Calu3 (cell line): ENCODE measurements at regions of chr2 and their contacts with region 1.

Region 1: DNA sequence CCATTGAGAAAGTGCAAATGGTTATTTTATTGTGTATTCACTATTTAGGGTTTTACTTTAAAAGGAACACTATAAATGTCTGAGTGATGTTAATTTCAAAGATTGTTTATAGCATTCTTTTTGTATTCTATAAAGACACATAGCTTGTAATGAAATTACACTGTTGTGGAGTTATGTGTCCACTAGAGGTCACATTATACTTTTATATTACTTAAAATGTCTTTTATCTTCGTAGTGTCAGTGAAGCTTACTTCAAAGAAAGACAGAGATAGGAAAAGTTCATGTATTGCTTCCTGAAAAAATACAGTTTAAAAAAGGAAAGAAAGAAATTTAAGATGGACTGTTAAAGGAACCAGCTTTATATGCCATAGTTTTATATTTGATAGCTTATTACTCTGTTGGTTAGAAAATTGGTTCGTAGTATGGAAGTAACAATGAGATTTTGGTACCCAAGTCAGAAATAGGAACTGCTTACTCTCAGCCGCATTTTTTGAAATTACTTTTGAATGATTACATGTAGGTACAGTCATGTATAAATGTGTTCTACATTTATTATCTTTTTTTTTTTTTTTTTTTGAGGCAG is 20.5 kb downstream of the APLF start:
- DNase-seq: no peak
- H3K4me3 Mint-ChIP-seq: no peak overlapping the region
- H3K27ac Mint-ChIP-seq: no peak overlapping the region
- H3K4me1 Mint-ChIP-seq: no peaks in the 10 kb centered on the region
- H3K27me3 Mint-ChIP-seq: no peaks in the 10 kb centered on the region
- CTCF ChIP-seq: no peak

Region 2: GRCh38 chr2:68441179-68441993 is 46.5 kb before region 1 on chr2:
- CTCF ChIA-PET with region 1: no interaction called
- intact Hi-C with region 1: no loop called
- DNase-seq: peak; percentile 75
- H3K4me3 Mint-ChIP-seq: no peak overlapping the region
- H3K27ac Mint-ChIP-seq: no peak overlapping the region
- H3K4me1 Mint-ChIP-seq: no peaks in the 10 kb centered on the region
- H3K27me3 Mint-ChIP-seq: peaks cover 20% of the 10 kb centered on the region
- CTCF ChIP-seq: peak; percentile 77

Region 3: DNA sequence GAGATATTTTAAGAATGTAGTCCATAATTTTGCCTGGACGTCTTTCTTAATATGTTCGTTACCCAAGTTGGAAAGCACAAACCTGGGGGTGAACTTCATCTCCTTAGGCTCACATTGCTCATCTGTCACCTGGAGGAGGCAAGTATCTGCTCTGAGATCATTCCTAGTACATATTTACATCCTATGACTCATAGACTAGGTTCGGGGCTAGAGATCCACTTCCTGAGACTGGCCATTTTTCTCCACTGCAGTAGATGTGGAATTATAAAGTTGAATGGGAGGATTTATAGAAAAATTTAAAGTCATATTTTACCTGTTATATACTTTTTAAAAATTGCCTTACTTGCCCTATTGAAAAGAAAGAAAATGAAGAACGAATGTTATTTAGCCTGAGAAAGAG is 78.0 kb after region 1 on chr2:
- CTCF ChIA-PET with region 1: no interaction called
- intact Hi-C with region 1: no loop called
- DNase-seq: no peak
- H3K4me3 Mint-ChIP-seq: no peak overlapping the region
- H3K27ac Mint-ChIP-seq: no peak overlapping the region
- H3K4me1 Mint-ChIP-seq: no peaks in the 10 kb centered on the region
- H3K27me3 Mint-ChIP-seq: no peaks in the 10 kb centered on the region
- CTCF ChIP-seq: no peak

Region 4: DNA sequence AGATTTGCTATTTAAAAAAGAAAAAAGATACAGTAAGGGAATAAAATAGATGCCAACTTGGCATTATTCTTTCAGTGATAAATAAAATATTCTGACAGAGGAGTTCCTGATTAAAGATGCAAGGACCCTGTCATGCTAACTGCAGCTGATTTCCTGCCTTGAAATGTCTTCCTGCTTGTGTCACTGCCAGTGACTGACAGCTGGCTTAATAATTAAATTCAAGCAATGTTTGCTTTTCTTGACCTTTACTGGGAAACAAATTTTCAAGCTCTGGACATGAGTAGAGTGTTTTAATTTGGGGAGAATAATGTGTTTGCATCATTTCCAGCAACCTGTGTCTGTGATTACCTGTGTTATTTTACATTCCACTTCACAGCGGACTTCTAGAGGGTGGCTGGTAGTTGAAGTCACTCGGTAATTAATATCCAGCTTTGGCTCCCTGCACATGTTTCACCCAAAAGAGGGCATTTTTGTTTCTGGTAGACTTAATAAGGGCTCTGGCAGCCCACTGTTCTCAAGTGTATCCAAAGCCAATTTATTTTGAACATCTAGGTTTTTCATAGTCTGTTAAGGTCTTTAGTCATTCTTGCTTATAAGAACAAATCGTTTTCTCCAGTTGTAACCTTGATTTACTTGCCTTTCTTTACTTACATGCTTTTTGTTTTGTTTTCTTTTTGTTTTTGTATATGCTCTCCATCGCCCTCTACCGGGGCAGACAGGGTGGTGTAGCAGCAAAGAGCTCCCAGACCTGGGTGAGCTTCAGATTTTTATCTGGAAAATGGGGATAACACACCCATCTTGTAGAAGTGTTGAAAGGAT is 107.0 kb after region 1 on chr2:
- CTCF ChIA-PET with region 1: interaction called, 29 read pairs
- intact Hi-C with region 1: loop called (anchors 1 kb)
- DNase-seq: peak; percentile 53
- H3K4me3 Mint-ChIP-seq: no peak overlapping the region
- H3K27ac Mint-ChIP-seq: no peak overlapping the region
- H3K4me1 Mint-ChIP-seq: peaks cover 14% of the 10 kb centered on the region
- H3K27me3 Mint-ChIP-seq: no peaks in the 10 kb centered on the region
- CTCF ChIP-seq: peak; percentile 70

Region 5: DNA sequence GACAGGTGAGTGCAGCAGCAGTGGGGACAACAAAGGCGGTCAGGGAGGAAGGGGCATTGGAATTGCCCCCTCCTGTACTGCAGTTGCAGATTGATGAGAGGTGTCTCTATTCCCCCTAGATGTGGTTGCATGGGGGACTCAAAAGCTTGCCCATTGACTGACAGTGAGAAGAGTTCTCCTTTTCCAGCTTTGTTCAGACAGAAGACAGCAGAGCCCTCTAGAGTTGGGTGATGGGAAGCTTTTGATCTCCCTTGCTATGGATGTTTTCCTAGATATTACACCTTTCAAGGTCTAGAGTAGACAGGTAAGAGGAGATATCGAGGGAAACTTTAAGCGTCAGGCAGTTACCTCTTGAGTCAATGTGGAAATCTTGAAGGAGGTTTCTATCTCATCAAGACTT is 158.4 kb after region 1 on chr2:
- CTCF ChIA-PET with region 1: interaction called, 10 read pairs
- intact Hi-C with region 1: loop called (anchors 1 kb)
- DNase-seq: no peak
- H3K4me3 Mint-ChIP-seq: no peak overlapping the region
- H3K27ac Mint-ChIP-seq: no peak overlapping the region
- H3K4me1 Mint-ChIP-seq: no peaks in the 10 kb centered on the region
- H3K27me3 Mint-ChIP-seq: peaks cover 100% of the 10 kb centered on the region
- CTCF ChIP-seq: no peak

Region 6: DNA sequence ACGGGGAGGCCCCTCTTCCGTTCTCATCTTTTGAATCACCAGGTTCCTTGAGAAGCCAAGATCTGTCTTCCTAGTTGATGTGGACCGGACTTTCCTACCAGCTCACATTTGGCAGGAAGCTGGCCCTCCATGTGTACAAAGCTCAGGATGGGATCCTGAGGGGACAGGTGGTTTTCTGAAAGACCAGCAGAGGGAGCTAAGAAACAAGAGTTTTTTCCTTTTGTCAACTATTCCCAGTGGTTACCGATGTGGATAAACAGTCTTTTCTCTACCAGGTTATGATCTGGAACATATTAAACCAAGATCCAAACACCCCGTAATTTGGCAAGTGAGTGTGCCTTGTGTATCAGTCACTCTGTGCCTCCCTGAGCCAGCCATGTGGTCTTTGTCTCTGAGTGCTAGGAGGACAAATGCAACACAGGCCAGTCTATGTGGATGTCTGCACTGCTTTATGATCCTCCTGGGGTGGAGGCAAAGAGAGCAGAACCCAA is 221.6 kb after region 1 on chr2:
- CTCF ChIA-PET with region 1: interaction called, 10 read pairs
- intact Hi-C with region 1: loop called (anchors 2 kb)
- DNase-seq: peak; percentile 17
- H3K4me3 Mint-ChIP-seq: no peak overlapping the region
- H3K27ac Mint-ChIP-seq: no peak overlapping the region
- H3K4me1 Mint-ChIP-seq: peaks cover 5% of the 10 kb centered on the region
- H3K27me3 Mint-ChIP-seq: peaks cover 59% of the 10 kb centered on the region
- CTCF ChIP-seq: peak; percentile 48